Endothelial cell of umbilical vein (primary cell): ENCODE measurements at regions of chr7 and their contacts with region 1.

Region 1: DNA sequence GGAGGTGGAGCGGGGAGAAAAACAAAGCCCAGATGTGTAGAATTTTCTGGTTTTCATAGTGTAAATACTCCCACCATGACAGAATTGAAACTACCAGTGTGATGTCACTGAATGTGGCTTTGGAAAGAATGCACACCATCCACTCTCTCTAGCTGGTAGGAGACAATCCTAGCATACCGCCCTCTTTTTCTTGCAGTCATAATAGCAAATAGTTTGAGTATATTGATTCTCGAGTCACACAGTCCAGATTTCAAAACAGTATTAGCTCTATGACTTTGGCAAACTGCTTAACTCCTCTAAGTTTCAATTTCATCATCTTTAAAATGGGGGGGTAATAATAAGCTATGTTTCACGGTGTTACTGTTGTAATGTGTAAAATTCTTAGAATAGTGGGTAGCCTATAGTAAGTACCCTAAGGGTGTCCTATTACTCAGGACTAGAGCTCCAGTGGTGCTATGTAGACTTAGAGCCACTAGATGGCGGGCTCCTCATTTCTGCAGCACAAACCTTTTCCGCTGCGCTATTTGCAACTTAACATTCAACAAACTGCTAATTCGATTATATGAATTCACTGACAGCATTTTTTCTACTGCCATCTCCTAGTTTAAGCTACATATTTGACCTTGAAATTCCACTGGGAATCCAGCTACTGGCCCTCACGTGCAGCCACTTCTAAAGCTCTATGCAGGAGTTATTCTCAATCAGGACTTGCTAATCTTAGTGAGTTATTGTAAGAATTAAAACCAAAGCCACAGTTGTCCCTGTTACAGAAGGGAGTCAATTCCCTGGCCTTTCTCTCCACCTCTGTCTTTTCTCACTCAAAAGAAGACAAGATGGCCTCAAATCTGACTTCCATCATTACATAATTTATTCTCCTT is 18.7 kb downstream of the TAS2R40 start:
- DNase-seq: peak; percentile 80
- H3K4me3 ChIP-seq: no peak overlapping the region
- H3K27ac ChIP-seq: no peak overlapping the region
- H3K4me1 ChIP-seq: peaks cover 7% of the 10 kb centered on the region
- H3K27me3 ChIP-seq: peaks cover 2 to 8% of the 10 kb centered on the region in 2 experiments
- CTCF ChIP-seq: peak; percentile 82 to 86
- POLR2A ChIP-seq: no peak

Region 2: GRCh38 chr7:142873281-142873787 is 367.2 kb before region 1 on chr7:
- CTCF ChIA-PET with region 1: no interaction called
- POLR2A ChIA-PET with region 1: no interaction called
- dilution Hi-C with region 1: no loop called
- intact Hi-C with region 1: no loop called
- DNase-seq: no peak
- H3K4me3 ChIP-seq: no peak overlapping the region
- H3K27ac ChIP-seq: no peak overlapping the region
- H3K4me1 ChIP-seq: no peaks in the 10 kb centered on the region
- H3K27me3 ChIP-seq: peaks cover 0 to 2% of the 10 kb centered on the region in 2 experiments
- CTCF ChIP-seq: peak; percentile 35 to 48
- POLR2A ChIP-seq: no peak

Region 3: GRCh38 chr7:143229054-143229790 is 11.3 kb before region 1 on chr7:
- CTCF ChIA-PET with region 1: interaction called, 15 read pairs
- POLR2A ChIA-PET with region 1: no interaction called
- dilution Hi-C with region 1: no loop called
- intact Hi-C with region 1: no loop called
- DNase-seq: no peak
- H3K4me3 ChIP-seq: no peak overlapping the region
- H3K27ac ChIP-seq: no peak overlapping the region
- H3K4me1 ChIP-seq: no peaks in the 10 kb centered on the region
- H3K27me3 ChIP-seq: peaks cover 13 to 18% of the 10 kb centered on the region in 2 experiments
- CTCF ChIP-seq: no peak
- POLR2A ChIP-seq: no peak

Region 4: GRCh38 chr7:143279186-143280098 is 38.9 kb after region 1 on chr7:
- CTCF ChIA-PET with region 1: interaction called, 10 read pairs
- POLR2A ChIA-PET with region 1: no interaction called
- dilution Hi-C with region 1: no loop called
- intact Hi-C with region 1: no loop called
- DNase-seq: peak; percentile 83
- H3K4me3 ChIP-seq: no peak overlapping the region
- H3K27ac ChIP-seq: peak overlapping the region; percentile 34
- H3K4me1 ChIP-seq: peaks cover 7% of the 10 kb centered on the region
- H3K27me3 ChIP-seq: no peaks in the 10 kb centered on the region
- CTCF ChIP-seq: no peak
- POLR2A ChIP-seq: no peak

Region 5: DNA sequence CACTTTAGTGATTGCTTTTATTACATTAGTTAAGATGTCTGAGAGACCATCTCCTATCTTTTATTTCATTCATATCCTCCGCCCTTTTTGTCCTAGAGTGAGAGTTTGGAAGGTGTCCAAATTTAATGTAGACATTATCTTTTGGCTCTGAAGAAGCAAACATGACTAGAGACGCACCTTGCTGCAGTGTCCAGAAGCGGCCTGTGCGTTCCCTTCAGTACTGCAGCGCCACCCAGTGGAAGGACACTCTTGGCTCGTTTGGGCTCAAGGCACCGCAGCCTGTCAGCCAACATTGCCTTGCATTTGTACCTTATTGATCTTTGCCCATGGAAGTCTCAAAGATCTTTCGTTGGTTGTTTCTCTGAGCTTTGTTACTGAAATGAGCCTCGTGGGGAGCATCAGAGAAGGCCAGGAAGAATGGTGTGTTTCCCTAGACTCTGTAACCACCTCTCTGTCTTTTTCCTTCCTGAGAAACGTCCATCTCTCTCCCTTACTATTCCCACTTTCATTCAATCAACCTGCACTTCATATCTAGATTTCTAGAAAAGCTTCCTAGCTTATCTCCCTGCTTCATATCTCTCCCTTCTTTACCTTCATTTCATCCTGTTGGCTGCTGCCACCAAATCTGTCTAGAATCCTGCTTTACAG is 65.0 kb after region 1 on chr7:
- CTCF ChIA-PET with region 1: interaction called, 45 read pairs
- POLR2A ChIA-PET with region 1: no interaction called
- dilution Hi-C with region 1: no loop called
- intact Hi-C with region 1: loop called (anchors 1 kb)
- DNase-seq: peak; percentile 57
- H3K4me3 ChIP-seq: no peak overlapping the region
- H3K27ac ChIP-seq: no peak overlapping the region
- H3K4me1 ChIP-seq: no peaks in the 10 kb centered on the region
- H3K27me3 ChIP-seq: no peaks in the 10 kb centered on the region
- CTCF ChIP-seq: peak; percentile 72 to 86
- POLR2A ChIP-seq: no peak

Region 6: GRCh38 chr7:143408686-143409561 is 168.4 kb after region 1 on chr7 and contains the start of gene EPHA1:
- CTCF ChIA-PET with region 1: interaction called, 16 read pairs
- POLR2A ChIA-PET with region 1: no interaction called
- dilution Hi-C with region 1: no loop called
- intact Hi-C with region 1: no loop called
- DNase-seq: no peak
- H3K4me3 ChIP-seq: no peak within 1 kb of the TSS
- H3K27ac ChIP-seq: no peak within 1 kb of the TSS
- H3K4me1 ChIP-seq: peaks cover 14% of the 10 kb centered on the region
- H3K27me3 ChIP-seq: no peaks in the 10 kb centered on the region
- CTCF ChIP-seq: peak; percentile 24 to 34
- POLR2A ChIP-seq: no peak
- total RNA-seq, gene EPHA1: not detected in 2 replicates

Region 7: DNA sequence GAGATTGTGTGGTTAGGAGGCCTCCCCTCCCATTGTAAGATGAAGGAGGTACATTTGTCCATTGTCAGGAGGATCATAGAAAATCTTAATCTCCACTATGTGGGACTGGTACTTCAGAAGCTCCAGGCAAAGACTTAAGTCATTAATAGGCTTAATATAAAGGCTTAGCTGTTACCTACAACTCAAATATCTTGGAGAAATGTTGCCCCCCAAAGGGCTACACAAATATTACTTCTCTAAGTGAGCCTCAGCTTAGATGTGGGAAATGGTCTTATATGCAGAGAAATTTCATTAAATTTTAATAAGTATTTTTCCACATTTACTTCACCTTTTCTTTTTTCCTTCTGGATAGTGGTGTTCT is 264.4 kb after region 1 on chr7:
- CTCF ChIA-PET with region 1: interaction called, 13 read pairs
- POLR2A ChIA-PET with region 1: no interaction called
- dilution Hi-C with region 1: no loop called
- intact Hi-C with region 1: loop called (anchors 5 kb)
- DNase-seq: peak; percentile 78
- H3K4me3 ChIP-seq: no peak overlapping the region
- H3K27ac ChIP-seq: no peak overlapping the region
- H3K4me1 ChIP-seq: peaks cover 19% of the 10 kb centered on the region
- H3K27me3 ChIP-seq: no peaks in the 10 kb centered on the region
- CTCF ChIP-seq: peak in 1 of 2 donors; percentile 15
- POLR2A ChIP-seq: no peak